GM23248 (cell line): ENCODE measurements at regions of chr11 and their contacts with region 1.

Region 1: DNA sequence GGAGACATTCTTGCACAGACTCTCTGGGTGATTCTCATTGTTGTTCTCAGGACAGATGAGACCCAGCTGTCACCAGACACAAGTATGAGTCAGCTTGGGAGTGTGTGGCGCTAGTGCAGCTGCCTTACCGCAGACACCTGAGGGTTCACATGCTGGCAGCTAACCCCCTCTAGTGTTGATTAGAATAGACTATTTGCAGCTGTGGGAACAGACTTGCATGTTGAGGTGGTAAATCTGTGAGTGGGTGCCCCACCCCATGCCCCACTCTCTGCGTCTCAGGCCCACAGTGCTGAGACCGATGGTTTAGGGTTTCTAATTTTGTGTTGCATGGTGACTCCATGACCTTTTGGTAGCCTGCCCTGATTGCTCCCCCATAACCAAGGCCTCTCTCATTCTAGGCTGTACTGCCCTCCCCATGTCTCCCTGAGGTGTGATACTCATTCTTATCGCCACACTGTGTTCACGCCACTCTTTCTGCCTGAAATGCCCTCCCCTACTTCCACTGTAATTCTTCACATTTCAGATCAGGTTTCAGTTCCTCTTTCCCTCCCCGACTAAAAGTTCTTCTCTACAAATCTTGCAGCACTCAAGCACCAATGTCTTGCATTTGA is 73.7 kb upstream of the KIRREL3 start:
- DNase-seq: peak; percentile 84
- H3K4me3 ChIP-seq: no peak overlapping the region
- H3K27ac ChIP-seq: no peak overlapping the region
- H3K4me1 ChIP-seq: peaks cover 9% of the 10 kb centered on the region
- H3K27me3 ChIP-seq: peaks cover 46% of the 10 kb centered on the region

Region 2: DNA sequence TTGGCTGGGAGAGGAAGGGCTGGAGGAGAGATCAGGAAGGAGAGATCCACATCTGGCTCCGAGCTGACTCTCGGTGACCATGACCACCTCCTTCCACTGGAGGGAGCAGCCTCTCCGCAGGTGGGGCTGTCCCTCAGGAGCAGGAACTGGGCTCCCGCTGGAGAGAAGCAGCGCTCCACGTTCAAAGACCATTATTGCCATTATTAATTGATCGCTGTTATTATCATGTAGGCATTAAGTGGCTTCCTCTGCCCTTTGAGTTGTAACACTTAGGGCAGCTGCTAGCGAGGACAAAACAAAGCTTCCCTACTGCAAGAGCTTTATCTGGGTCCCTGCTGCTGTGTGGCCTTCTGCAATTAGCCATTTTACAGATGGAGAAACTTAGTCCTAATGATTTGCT is 466.9 kb before region 1 on chr11:
- in situ Hi-C with region 1: loop called (anchors 10 kb)
- DNase-seq: peak; percentile 89
- H3K4me3 ChIP-seq: no peak overlapping the region
- H3K27ac ChIP-seq: no peak overlapping the region
- H3K4me1 ChIP-seq: 0 out of 2 replicates have a peak, but pooled peaks cover 4% of the 10 kb centered on the region
- H3K27me3 ChIP-seq: no peaks in the 10 kb centered on the region

Region 3: GRCh38 chr11:126716456-126717083 is 357.7 kb before region 1 on chr11:
- in situ Hi-C with region 1: no loop called
- DNase-seq: peak; percentile 47
- H3K4me3 ChIP-seq: no peak overlapping the region
- H3K27ac ChIP-seq: no peak overlapping the region
- H3K4me1 ChIP-seq: peaks cover 24% of the 10 kb centered on the region
- H3K27me3 ChIP-seq: no peaks in the 10 kb centered on the region

Region 4: GRCh38 chr11:127454856-127455255 is 380.6 kb after region 1 on chr11:
- in situ Hi-C with region 1: no loop called
- DNase-seq: no peak
- H3K4me3 ChIP-seq: no peak overlapping the region
- H3K27ac ChIP-seq: no peak overlapping the region
- H3K4me1 ChIP-seq: no peaks in the 10 kb centered on the region
- H3K27me3 ChIP-seq: peaks cover 8% of the 10 kb centered on the region